ENCODE measurements at regions of chr4 and their contacts with region 1.

Region 1: GRCh38 chr4:70927502-70928137 is 25.5 kb downstream of the MOB1B start:
- DNase-seq: peak; percentile 77
- H3K4me3 Mint-ChIP-seq: peak overlapping the region; percentile 25
- H3K27ac Mint-ChIP-seq: peak overlapping the region; percentile 30
- H3K4me1 Mint-ChIP-seq: peaks cover 36% of the 10 kb centered on the region
- H3K27me3 Mint-ChIP-seq: no peaks in the 10 kb centered on the region

Region 2: GRCh38 chr4:70515367-70516245 is 412.0 kb before region 1 on chr4:
- intact Hi-C with region 1: no loop called
- DNase-seq: no peak
- H3K4me3 Mint-ChIP-seq: no peak overlapping the region
- H3K27ac Mint-ChIP-seq: no peak overlapping the region
- H3K4me1 Mint-ChIP-seq: no peaks in the 10 kb centered on the region
- H3K27me3 Mint-ChIP-seq: peaks cover 2% of the 10 kb centered on the region

Region 3: GRCh38 chr4:70734168-70734954 is 193.3 kb before region 1 on chr4:
- intact Hi-C with region 1: loop called (anchors 10 kb)
- DNase-seq: peak; percentile 85
- H3K4me3 Mint-ChIP-seq: peak overlapping the region; percentile 73
- H3K27ac Mint-ChIP-seq: peak overlapping the region; percentile 48
- H3K4me1 Mint-ChIP-seq: peaks cover 33% of the 10 kb centered on the region
- H3K27me3 Mint-ChIP-seq: no peaks in the 10 kb centered on the region

Region 4: DNA sequence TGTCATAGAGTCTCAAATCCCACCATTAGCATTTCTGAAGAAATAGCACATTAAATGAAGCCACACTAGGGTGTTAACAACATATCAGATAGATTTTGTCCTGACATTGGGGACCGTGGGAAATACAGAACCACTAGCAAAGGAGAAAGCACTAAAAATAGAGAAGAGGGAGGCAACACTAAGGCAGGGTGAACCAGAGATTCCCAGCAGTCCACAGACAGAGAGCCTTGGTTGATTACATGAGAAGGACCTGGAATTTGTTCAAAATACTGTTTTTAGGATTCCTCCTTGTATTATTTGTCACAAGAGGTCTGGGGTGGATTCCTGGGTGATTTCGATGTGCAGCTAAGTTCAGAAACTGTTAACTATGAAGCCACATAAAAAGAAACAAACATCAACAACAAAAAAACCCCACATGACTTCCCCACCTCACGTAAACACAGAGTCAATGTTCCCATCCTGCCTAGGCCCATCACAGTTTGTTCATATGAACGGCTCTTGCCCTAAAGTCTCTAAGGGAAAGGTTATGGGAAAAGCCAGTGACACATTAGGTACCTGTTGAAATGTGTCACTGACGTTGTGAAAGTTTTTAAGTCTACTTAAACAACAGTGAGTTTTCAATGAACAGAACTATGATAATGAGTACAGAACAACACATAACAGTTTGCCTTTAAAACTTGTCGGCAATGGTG is 64.4 kb before region 1 on chr4:
- intact Hi-C with region 1: loop called (anchors 5 kb)
- DNase-seq: peak; percentile 72
- H3K4me3 Mint-ChIP-seq: peak overlapping the region; percentile 57
- H3K27ac Mint-ChIP-seq: peak overlapping the region; percentile 72
- H3K4me1 Mint-ChIP-seq: peaks cover 13% of the 10 kb centered on the region
- H3K27me3 Mint-ChIP-seq: no peaks in the 10 kb centered on the region

Region 5: GRCh38 chr4:70901984-70902576 is 25.5 kb before region 1 on chr4 and contains the start of gene MOB1B:
- intact Hi-C with region 1: loop called (anchors 2 kb)
- DNase-seq: peak; percentile 95
- H3K4me3 Mint-ChIP-seq: peak within 1 kb of the TSS; percentile 98
- H3K27ac Mint-ChIP-seq: peak within 1 kb of the TSS; percentile 92
- H3K4me1 Mint-ChIP-seq: peaks cover 18% of the 10 kb centered on the region
- H3K27me3 Mint-ChIP-seq: no peaks in the 10 kb centered on the region
- total RNA-seq, gene MOB1B: 23.1 and 24.1 TPM in 2 replicates

Region 6: DNA sequence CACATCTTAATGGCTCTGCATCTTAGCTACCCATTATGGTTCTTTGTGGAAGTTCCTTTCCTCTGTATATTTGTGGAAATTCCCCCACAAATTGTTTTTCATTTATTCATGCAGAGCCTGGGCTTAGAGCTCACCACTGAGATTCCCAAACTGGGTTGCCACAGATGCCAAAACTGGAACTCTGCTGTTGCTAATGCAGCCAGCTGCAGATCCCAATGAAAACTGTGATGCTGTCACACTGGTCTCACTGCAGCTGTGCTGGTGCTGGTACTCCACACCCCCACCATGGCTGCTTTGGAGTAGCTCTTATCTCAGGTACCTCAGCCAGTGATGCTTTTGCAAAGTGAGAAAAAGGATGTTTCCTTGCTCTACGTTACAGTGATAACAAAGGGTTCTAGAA is 153.6 kb after region 1 on chr4:
- intact Hi-C with region 1: no loop called
- DNase-seq: no peak
- H3K4me3 Mint-ChIP-seq: no peak overlapping the region
- H3K27ac Mint-ChIP-seq: no peak overlapping the region
- H3K4me1 Mint-ChIP-seq: no peaks in the 10 kb centered on the region
- H3K27me3 Mint-ChIP-seq: peaks cover 2% of the 10 kb centered on the region